Activated CD4-positive, alpha-beta T cell treated with anti-CD3 and anti-CD28 coated beads, Interleukin-2, amount 10 ng/mL, durations not matched to agents 24 days and 14 days (primary cell): ENCODE measurements at regions of chr4 and their contacts with region 1.

Region 1: GRCh38 chr4:40193016-40193571 is 3.7 kb upstream of the RHOH start:
- DNase-seq: peak; percentile 87
- H3K4me3 Mint-ChIP-seq: peak overlapping the region; percentile 93
- H3K27ac Mint-ChIP-seq: peak overlapping the region; percentile 94
- H3K4me1 Mint-ChIP-seq: peaks cover 67% of the 10 kb centered on the region
- H3K27me3 Mint-ChIP-seq: no peaks in the 10 kb centered on the region

Region 2: DNA sequence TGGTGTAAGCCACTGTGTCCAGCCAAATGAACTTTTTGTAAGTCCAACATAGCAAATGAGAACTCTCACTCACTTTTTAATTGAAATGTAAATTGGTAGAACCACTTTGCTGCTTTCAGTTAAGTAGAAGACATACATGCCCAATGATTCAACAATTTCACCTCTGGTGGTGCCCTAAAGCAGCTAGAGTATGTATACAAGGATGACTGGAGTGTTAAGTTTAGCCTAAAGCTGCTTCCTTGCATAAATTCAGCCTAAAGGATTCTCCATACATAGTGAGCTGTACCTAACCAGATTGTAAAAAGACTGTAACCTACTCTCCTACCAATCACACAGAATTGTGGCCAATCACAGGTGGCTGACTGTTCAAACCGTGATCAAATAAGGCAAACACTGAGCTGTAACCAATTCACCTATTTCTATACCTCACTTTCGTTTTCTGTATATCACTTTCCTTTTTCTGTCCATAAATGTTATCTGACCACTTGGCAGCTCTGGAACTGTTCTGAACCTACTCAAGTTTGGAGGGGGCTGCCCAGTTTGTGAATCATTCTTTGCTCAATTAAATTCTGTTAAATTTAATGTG is 255.3 kb before region 1 on chr4:
- intact Hi-C with region 1: no loop called
- DNase-seq: no peak
- H3K4me3 Mint-ChIP-seq: no peak overlapping the region
- H3K27ac Mint-ChIP-seq: peak overlapping the region; percentile 35
- H3K4me1 Mint-ChIP-seq: peaks cover 39% of the 10 kb centered on the region
- H3K27me3 Mint-ChIP-seq: no peaks in the 10 kb centered on the region

Region 3: GRCh38 chr4:40205259-40206198 is 12.4 kb after region 1 on chr4:
- intact Hi-C with region 1: loop called (anchors 1 kb)
- DNase-seq: peak; percentile 87
- H3K4me3 Mint-ChIP-seq: peak overlapping the region; percentile 93
- H3K27ac Mint-ChIP-seq: peak overlapping the region; percentile 94
- H3K4me1 Mint-ChIP-seq: peaks cover 66% of the 10 kb centered on the region
- H3K27me3 Mint-ChIP-seq: no peaks in the 10 kb centered on the region

Region 4: GRCh38 chr4:40238700-40239548 is 45.8 kb after region 1 on chr4:
- intact Hi-C with region 1: no loop called
- DNase-seq: peak; percentile 92
- H3K4me3 Mint-ChIP-seq: peak overlapping the region; percentile 75
- H3K27ac Mint-ChIP-seq: peak overlapping the region; percentile 95
- H3K4me1 Mint-ChIP-seq: peaks cover 81% of the 10 kb centered on the region
- H3K27me3 Mint-ChIP-seq: no peaks in the 10 kb centered on the region